ENCODE measurements at regions of chr2 and their contacts with region 1.

Region 1: DNA sequence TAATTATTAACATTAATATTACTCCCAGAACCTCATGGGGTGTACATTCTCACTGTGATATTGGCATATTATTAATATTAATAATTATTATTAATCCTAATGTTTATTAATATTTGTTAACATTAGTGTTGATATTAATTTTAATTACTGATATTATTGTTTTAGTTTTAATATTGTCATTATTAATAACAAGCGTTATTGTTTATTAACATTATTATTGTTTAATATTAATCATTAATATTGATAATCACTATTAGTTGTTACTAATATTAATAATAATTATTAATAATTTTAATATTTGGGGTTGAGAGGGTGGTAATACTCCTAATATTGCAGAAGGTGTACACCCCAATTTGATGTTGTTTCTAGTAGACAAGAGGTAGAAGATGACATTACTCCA is 193.1 kb upstream of the XIRP2 start:
- DNase-seq: no peak
- H3K4me3 Mint-ChIP-seq: no peak overlapping the region
- H3K27ac Mint-ChIP-seq: no peak overlapping the region
- H3K4me1 Mint-ChIP-seq: no peaks in the 10 kb centered on the region
- H3K27me3 Mint-ChIP-seq: no peaks in the 10 kb centered on the region

Region 2: GRCh38 chr2:166825914-166826313 is 130.8 kb after region 1 on chr2:
- intact Hi-C with region 1: loop called (anchors 5 kb)
- DNase-seq: no peak
- H3K4me3 Mint-ChIP-seq: no peak overlapping the region
- H3K27ac Mint-ChIP-seq: no peak overlapping the region
- H3K4me1 Mint-ChIP-seq: no peaks in the 10 kb centered on the region
- H3K27me3 Mint-ChIP-seq: no peaks in the 10 kb centered on the region

Measured in activated T-helper 2 cell treated with anti-CD3 and anti-CD28 coated beads, Interferon-gamma antibody, Interleukin-2, Interleukin-4, amounts not matched to agents 10 μg/mL and 5 μg/mL and 100 μg/mL, durations not matched to agents 14 hours and 24 hours and 36 hours (primary cell).